Vagina (tissue), 2 donors: ENCODE measurements at regions of chr18 and their contacts with region 1.

Region 1: DNA sequence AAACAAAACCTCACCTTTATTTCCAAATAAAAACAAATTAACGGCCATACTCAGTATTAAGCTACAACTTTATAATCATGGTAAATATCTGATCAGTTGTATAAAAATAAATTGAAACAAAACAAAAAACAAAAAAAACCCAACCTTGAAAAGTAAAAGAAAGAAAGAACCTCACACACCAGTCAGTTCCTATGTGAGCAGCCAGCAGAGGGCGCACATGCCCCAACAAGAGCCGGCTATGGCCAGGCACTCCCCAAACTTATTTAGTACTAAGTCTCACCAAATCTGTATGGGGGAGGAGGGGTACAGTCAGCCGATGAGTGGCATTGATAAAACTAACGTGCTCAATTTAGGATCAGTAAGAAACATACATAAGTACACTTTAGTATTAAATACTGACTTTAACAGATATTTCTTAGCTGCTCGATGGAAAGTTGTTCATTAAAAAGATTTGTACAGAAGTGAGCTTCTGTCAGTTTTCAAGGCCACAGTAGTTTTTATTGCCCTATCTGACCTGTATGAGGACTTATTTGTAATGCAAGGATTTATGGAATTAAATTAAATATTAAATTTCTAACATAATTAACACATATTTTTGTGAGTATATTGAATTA is 172.6 kb downstream of the TCF4 start:
- DNase-seq: no peak
- H3K4me3 ChIP-seq: no peak overlapping the region
- H3K27ac ChIP-seq: peak overlapping the region; percentile 51
- H3K4me1 ChIP-seq: peaks cover 32% of the 10 kb centered on the region
- H3K27me3 ChIP-seq: no peaks in the 10 kb centered on the region
- CTCF ChIP-seq: peak; percentile 67 to 92 (median 78)
- POLR2A ChIP-seq: no peak

Region 2: GRCh38 chr18:55234366-55235093 is 180.8 kb before region 1 on chr18:
- intact Hi-C with region 1: loop called (anchors 10 kb)
- DNase-seq: no peak
- H3K4me3 ChIP-seq: no peak overlapping the region
- H3K27ac ChIP-seq: peak overlapping the region; percentile 37
- H3K4me1 ChIP-seq: peaks cover 12% of the 10 kb centered on the region
- H3K27me3 ChIP-seq: no peaks in the 10 kb centered on the region
- CTCF ChIP-seq: peak; percentile 51 to 83 (median 55)
- POLR2A ChIP-seq: no peak

Region 3: DNA sequence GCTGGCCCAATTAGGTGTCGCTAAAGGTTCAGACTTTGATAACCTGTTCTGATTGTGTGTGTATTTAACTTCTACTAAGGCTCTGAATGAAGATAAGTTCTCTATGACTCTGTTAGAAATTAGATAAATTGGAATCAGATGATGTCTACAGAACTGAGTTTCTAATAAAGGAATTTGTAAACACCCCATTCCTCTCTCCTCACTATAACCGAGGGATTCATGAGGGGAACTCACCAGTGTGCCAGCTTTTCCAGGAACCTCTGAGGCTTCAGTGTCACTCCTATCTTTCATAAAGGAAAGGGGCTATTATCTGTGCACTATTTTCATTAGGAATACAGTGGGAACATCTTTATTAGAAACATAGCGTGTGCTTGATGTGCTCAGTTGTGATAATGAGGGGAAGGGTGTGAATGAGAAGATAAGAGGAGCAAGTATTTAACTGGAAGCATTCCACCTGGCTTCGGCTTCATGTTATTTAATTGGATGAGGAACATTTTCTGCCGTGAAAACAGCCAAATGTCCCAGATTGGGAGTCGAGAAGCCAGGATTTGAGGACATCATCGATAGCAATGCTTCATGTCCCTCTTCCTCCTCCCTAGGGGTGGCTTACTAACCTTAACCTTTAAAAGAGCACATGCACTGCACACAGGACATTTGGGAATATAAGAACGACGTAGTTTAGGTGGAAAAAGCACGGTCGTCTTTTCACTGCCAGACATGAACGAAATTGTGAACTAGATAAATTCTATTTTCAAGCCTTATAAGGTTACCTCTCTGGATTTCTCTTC is 257.4 kb after region 1 on chr18:
- intact Hi-C with region 1: no loop called
- DNase-seq: no peak
- H3K4me3 ChIP-seq: peak overlapping the region in 1 of 2 donors; percentile 15
- H3K27ac ChIP-seq: peak overlapping the region; percentile 41
- H3K4me1 ChIP-seq: no peaks in the 10 kb centered on the region
- H3K27me3 ChIP-seq: no peaks in the 10 kb centered on the region
- CTCF ChIP-seq: no peak
- POLR2A ChIP-seq: no peak

Region 4: DNA sequence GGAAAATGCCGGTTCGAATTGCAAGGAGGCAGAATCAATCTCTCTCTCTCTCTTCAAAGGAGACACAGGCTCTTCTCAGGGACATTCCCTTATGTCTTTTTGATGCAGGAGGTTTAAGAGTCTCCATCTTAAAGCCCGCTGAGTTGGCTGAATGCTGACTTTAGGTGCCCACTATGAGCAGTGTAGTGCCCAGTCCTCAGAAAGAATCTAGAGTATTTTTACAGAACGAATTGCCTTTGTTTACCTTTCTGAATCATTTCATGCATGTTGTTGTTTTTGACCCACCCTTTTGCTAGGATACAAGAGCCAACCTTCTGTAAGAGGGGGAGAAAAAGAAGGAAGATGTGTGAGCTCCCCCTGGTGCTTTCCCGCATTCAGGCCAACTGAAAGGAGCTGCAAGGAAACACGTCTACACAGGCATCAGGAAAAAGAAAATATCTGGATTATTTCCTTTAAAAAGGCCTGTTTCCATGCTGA is 366.2 kb after region 1 on chr18:
- intact Hi-C with region 1: loop called (anchors 10 kb)
- DNase-seq: no peak
- H3K4me3 ChIP-seq: no peak overlapping the region
- H3K27ac ChIP-seq: peak overlapping the region; percentile 90
- H3K4me1 ChIP-seq: peaks cover 5% of the 10 kb centered on the region
- H3K27me3 ChIP-seq: no peaks in the 10 kb centered on the region
- CTCF ChIP-seq: peak in 2 of 3 experiments; percentile 40 to 49
- POLR2A ChIP-seq: no peak

Region 5: GRCh38 chr18:56575819-56576663 is 1160.7 kb after region 1 on chr18:
- intact Hi-C with region 1: loop called (anchors 10 kb)
- DNase-seq: no peak
- H3K4me3 ChIP-seq: no peak overlapping the region
- H3K27ac ChIP-seq: peak overlapping the region; percentile 30
- H3K4me1 ChIP-seq: peaks cover 16% of the 10 kb centered on the region
- H3K27me3 ChIP-seq: no peaks in the 10 kb centered on the region
- CTCF ChIP-seq: peak; percentile 54 to 81 (median 74)
- POLR2A ChIP-seq: no peak